CD8-positive, alpha-beta memory T cell (primary cell): ENCODE measurements at regions of chr5 and their contacts with region 1.

Region 1: DNA sequence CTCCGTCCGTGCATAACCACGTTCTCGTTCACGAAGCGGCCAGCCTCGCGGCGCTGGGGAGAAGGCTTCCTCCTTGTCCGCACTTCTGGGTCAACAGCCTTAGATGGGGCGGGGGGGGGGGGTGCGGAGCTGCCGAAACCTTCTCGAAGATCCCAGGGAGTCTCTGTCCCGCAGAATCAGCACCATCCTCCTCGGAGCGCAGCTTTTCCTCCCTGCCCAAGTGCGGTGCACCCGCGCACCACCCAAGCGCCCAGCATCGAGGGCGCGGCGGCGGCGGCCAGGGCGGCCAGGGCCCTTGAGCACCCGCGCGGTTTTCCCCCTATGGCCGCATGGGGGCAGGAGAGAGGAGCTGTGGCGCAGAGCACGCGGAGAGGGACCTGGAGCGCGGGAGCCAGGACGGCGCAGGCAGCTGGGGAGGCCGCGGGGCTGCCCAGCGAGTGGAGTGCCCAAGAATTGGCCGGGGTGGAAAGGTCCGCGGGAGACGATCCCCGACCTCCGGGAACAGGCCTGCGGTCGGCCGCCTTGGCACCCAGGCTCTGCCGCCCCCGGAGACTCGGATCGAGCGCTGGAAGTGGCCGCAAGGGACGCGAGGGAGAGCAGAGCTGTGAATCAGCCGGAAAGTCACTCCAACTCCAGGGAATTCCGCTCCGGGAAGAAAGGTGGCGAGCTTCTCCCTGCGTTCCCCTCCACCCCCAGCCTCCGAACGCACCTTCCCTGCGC is 43.1 kb downstream of the TMEM174 start:
- DNase-seq: peak; percentile 36 to 61 (median 55)
- H3K4me3 ChIP-seq: peak overlapping the region; percentile 20
- H3K4me3 Mint-ChIP-seq: peak overlapping the region in 6 of 7 donors; percentile 47 to 68 (median 66)
- H3K27ac ChIP-seq: no peak overlapping the region
- H3K27ac Mint-ChIP-seq: no peak overlapping the region
- H3K4me1 ChIP-seq: peaks cover 10% of the 10 kb centered on the region
- H3K4me1 Mint-ChIP-seq: peaks cover 12 to 26% (median 21%) of the 10 kb centered on the region in 3 donors
- H3K27me3 ChIP-seq: peaks cover 35% of the 10 kb centered on the region
- H3K27me3 Mint-ChIP-seq: peaks cover 65 to 79% of the 10 kb centered on the region in 2 donors

Region 2: DNA sequence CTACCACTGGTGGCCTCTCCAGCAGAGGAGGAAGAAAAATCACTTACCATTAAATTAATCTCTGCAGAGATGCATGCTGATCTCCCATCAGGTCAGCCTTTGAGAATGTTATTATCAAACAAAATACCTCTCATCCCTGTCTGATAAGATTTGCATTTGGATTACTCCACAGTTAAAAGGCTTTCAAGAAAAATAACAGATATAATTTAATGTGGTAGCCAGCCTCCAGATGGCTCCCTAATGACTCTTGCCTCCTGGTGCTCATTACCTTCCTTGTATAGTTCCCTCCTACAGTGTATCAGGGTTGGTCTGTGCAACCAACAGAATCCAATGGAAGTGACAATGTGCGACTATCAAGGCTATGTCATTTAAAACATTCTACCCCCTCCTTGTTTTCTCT is 463.1 kb before region 1 on chr5:
- CTCF ChIA-PET with region 1: no interaction called
- POLR2A ChIA-PET with region 1: no interaction called
- DNase-seq: no peak
- H3K4me3 ChIP-seq: no peak overlapping the region
- H3K4me3 Mint-ChIP-seq: no peak overlapping the region
- H3K27ac ChIP-seq: no peak overlapping the region
- H3K27ac Mint-ChIP-seq: no peak overlapping the region
- H3K4me1 ChIP-seq: no peaks in the 10 kb centered on the region
- H3K4me1 Mint-ChIP-seq: no peaks in the 10 kb centered on the region
- H3K27me3 ChIP-seq: no peaks in the 10 kb centered on the region
- H3K27me3 Mint-ChIP-seq: peaks cover 0 to 14% of the 10 kb centered on the region in 2 donors

Region 3: GRCh38 chr5:73201547-73202513 is 14.2 kb before region 1 on chr5:
- CTCF ChIA-PET with region 1: interaction called, 23 read pairs
- POLR2A ChIA-PET with region 1: no interaction called
- DNase-seq: peak; percentile 54 to 76 (median 56)
- H3K4me3 ChIP-seq: no peak overlapping the region
- H3K4me3 Mint-ChIP-seq: peak overlapping the region in 5 of 7 donors; percentile 33 to 60 (median 57)
- H3K27ac ChIP-seq: no peak overlapping the region
- H3K27ac Mint-ChIP-seq: peak overlapping the region in 1 of 8 donors; percentile 15
- H3K4me1 ChIP-seq: no peaks in the 10 kb centered on the region
- H3K4me1 Mint-ChIP-seq: peaks cover 0 to 4% (median 3%) of the 10 kb centered on the region in 3 donors
- H3K27me3 ChIP-seq: peaks cover 9% of the 10 kb centered on the region
- H3K27me3 Mint-ChIP-seq: peaks cover 30 to 57% of the 10 kb centered on the region in 2 donors

Region 4: GRCh38 chr5:73229209-73229661 is 13.2 kb after region 1 on chr5:
- CTCF ChIA-PET with region 1: interaction called, 19 read pairs
- POLR2A ChIA-PET with region 1: interaction called, 3 read pairs
- DNase-seq: no peak
- H3K4me3 ChIP-seq: no peak overlapping the region
- H3K4me3 Mint-ChIP-seq: no peak overlapping the region
- H3K27ac ChIP-seq: no peak overlapping the region
- H3K27ac Mint-ChIP-seq: no peak overlapping the region
- H3K4me1 ChIP-seq: peaks cover 22% of the 10 kb centered on the region
- H3K4me1 Mint-ChIP-seq: peaks cover 18 to 32% (median 25%) of the 10 kb centered on the region in 3 donors
- H3K27me3 ChIP-seq: peaks cover 43% of the 10 kb centered on the region
- H3K27me3 Mint-ChIP-seq: peaks cover 65 to 83% of the 10 kb centered on the region in 2 donors